CD14-positive monocyte (primary cell): ENCODE measurements at regions of chr10 and their contacts with region 1.

Region 1: DNA sequence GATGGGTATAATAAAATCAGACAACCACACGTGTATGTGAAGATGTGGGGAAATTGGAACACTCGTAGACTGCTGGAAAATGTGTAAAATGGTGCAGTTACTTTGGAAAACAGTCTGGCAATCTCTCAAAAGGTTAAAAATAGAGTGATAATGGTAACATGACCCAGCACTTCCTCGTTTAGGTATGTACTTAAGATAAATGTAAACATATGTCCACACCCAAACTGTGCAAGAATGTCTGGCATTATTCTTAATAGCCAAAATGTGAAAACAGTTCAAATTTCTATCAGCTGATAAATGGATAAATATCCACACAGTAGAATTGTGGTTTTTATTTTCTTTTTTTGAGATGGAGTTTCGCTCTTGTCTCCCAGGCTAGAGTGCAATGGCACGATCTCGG is 272.8 kb downstream of the ZNF248 start:
- DNase-seq: no peak
- H3K4me3 ChIP-seq: no peak overlapping the region
- H3K4me3 Mint-ChIP-seq: no peak overlapping the region
- H3K27ac ChIP-seq: no peak overlapping the region
- H3K27ac Mint-ChIP-seq: no peak overlapping the region
- H3K4me1 ChIP-seq: no peaks in the 10 kb centered on the region
- H3K4me1 Mint-ChIP-seq: no peaks in the 10 kb centered on the region
- H3K27me3 ChIP-seq: no peaks in the 10 kb centered on the region
- H3K27me3 Mint-ChIP-seq: no peaks in the 10 kb centered on the region
- CTCF ChIP-seq: no peak

Region 2: DNA sequence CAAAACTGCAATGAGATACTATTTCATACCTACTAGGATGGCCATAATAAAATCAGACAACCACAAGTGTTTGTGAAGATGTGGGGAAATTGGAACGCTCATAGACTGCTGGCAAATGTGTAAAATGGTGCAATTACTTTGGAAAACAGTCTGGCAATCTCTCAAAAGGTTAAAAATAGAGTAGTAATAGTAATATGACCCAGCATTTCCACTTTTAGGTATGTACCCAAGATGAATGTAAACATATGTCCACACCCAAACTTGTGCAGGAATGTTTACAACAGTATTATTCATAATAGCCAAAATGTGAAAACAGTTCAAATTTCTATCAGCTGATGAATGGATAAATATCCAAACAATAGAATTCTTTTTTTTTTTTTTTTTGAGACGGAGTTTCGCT is 1190.9 kb before region 1 on chr10:
- intact Hi-C with region 1: loop called in 1 of 2 experiments (anchors 10 kb)
- DNase-seq: no peak
- H3K4me3 ChIP-seq: no peak overlapping the region
- H3K4me3 Mint-ChIP-seq: no peak overlapping the region
- H3K27ac ChIP-seq: no peak overlapping the region
- H3K27ac Mint-ChIP-seq: no peak overlapping the region
- H3K4me1 ChIP-seq: no peaks in the 10 kb centered on the region
- H3K4me1 Mint-ChIP-seq: no peaks in the 10 kb centered on the region
- H3K27me3 ChIP-seq: no peaks in the 10 kb centered on the region
- H3K27me3 Mint-ChIP-seq: no peaks in the 10 kb centered on the region
- CTCF ChIP-seq: no peak

Region 3: GRCh38 chr10:37534166-37534565 is 50.5 kb before region 1 on chr10:
- intact Hi-C with region 1: no loop called
- DNase-seq: no peak
- H3K4me3 ChIP-seq: no peak overlapping the region
- H3K4me3 Mint-ChIP-seq: no peak overlapping the region
- H3K27ac ChIP-seq: no peak overlapping the region
- H3K27ac Mint-ChIP-seq: no peak overlapping the region
- H3K4me1 ChIP-seq: no peaks in the 10 kb centered on the region
- H3K4me1 Mint-ChIP-seq: no peaks in the 10 kb centered on the region
- H3K27me3 ChIP-seq: no peaks in the 10 kb centered on the region
- H3K27me3 Mint-ChIP-seq: no peaks in the 10 kb centered on the region
- CTCF ChIP-seq: no peak

Region 4: GRCh38 chr10:37654456-37654855 is 69.8 kb after region 1 on chr10:
- intact Hi-C with region 1: no loop called
- DNase-seq: no peak
- H3K4me3 ChIP-seq: no peak overlapping the region
- H3K4me3 Mint-ChIP-seq: no peak overlapping the region
- H3K27ac ChIP-seq: no peak overlapping the region
- H3K27ac Mint-ChIP-seq: no peak overlapping the region
- H3K4me1 ChIP-seq: no peaks in the 10 kb centered on the region
- H3K4me1 Mint-ChIP-seq: no peaks in the 10 kb centered on the region
- H3K27me3 ChIP-seq: no peaks in the 10 kb centered on the region
- H3K27me3 Mint-ChIP-seq: peaks cover 0 to 1% (median 0%) of the 10 kb centered on the region in 3 donors
- CTCF ChIP-seq: no peak